Left ventricle myocardium inferior (tissue), 1 donor: ENCODE measurements at regions of chr12 and their contacts with region 1.

Region 1: GRCh38 chr12:120649442-120650232 is 9.2 kb downstream of the CABP1 start:
- DNase-seq: peak; percentile 36
- H3K4me3 ChIP-seq: peak overlapping the region; percentile 64
- H3K27ac ChIP-seq: peak overlapping the region; percentile 90
- H3K4me1 ChIP-seq: peaks cover 45% of the 10 kb centered on the region
- H3K27me3 ChIP-seq: peaks cover 13% of the 10 kb centered on the region
- CTCF ChIP-seq: peak; percentile 10

Region 2: GRCh38 chr12:120584343-120585149 is 65.1 kb before region 1 on chr12:
- intact Hi-C with region 1: loop called (anchors 5 kb)
- DNase-seq: peak; percentile 45
- H3K4me3 ChIP-seq: peak overlapping the region; percentile 66
- H3K27ac ChIP-seq: peak overlapping the region; percentile 63
- H3K4me1 ChIP-seq: peaks cover 61% of the 10 kb centered on the region
- H3K27me3 ChIP-seq: no peaks in the 10 kb centered on the region
- CTCF ChIP-seq: peak; percentile 60

Region 3: GRCh38 chr12:120710031-120710804 is 60.6 kb after region 1 on chr12 and contains the start of gene UNC119B:
- intact Hi-C with region 1: loop called (anchors 5 kb)
- DNase-seq: peak; percentile 78
- H3K4me3 ChIP-seq: peak within 1 kb of the TSS; percentile 76
- H3K27ac ChIP-seq: peak within 1 kb of the TSS; percentile 91
- H3K4me1 ChIP-seq: peaks cover 44% of the 10 kb centered on the region
- H3K27me3 ChIP-seq: no peaks in the 10 kb centered on the region
- CTCF ChIP-seq: no peak
- total RNA-seq, gene UNC119B: 11.5 TPM

Region 4: DNA sequence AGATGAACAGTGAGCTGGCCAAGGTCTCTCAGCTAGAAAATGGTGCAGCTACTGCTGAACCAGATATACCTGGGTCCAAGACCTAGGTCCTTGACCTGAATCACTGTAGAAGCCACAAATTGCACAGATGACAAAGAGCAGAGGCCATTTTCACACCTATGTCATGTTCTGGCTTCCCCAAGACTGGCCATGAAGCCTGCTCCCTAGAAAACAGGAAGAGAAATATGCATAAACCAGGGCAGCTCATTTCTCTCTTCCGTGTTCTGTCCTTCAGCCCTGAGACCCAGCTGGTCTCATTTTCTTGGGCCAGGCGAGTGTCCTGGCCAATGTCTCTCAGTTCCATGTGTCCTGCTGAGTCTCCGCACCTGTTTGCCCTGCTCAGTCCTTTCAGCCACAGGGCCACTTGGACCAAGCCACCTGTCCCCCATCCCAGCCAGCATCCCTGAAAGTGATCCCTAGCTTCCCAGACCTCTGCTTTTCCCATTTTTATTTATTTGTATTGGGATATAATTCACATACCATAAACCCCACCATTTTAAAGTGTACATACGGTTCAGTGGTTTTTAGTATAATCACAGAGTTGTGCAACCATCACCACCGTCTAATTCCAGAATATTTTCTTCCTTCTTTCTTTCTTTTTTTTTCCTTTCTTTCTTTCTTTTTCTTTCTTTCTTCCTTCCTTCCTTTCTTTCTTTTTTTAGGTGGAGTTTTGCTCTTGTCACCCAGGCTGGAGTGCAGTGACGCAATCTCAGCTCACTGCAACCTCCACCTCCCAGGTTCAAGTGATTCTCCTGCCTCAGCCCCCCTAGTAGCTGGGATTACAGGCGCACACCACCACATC is 510.1 kb after region 1 on chr12:
- intact Hi-C with region 1: no loop called
- DNase-seq: no peak
- H3K4me3 ChIP-seq: no peak overlapping the region
- H3K27ac ChIP-seq: no peak overlapping the region
- H3K4me1 ChIP-seq: no peaks in the 10 kb centered on the region
- H3K27me3 ChIP-seq: no peaks in the 10 kb centered on the region
- CTCF ChIP-seq: no peak